Activated naive CD8-positive, alpha-beta T cell treated with anti-CD3 and anti-CD28 coated beads, Interleukin-2, amount 10 ng/mL, durations not matched to agents 7 days and 5 days (primary cell): ENCODE measurements at regions of chr2 and their contacts with region 1.

Region 1: GRCh38 chr2:64945973-64946768 is 43.0 kb upstream of the SLC1A4 start:
- DNase-seq: peak; percentile 79
- ATAC-seq: peak; percentile 97
- H3K4me3 Mint-ChIP-seq: peak overlapping the region; percentile 75
- H3K27ac Mint-ChIP-seq: peak overlapping the region; percentile 91
- H3K4me1 Mint-ChIP-seq: peaks cover 38% of the 10 kb centered on the region
- H3K27me3 Mint-ChIP-seq: no peaks in the 10 kb centered on the region

Region 2: DNA sequence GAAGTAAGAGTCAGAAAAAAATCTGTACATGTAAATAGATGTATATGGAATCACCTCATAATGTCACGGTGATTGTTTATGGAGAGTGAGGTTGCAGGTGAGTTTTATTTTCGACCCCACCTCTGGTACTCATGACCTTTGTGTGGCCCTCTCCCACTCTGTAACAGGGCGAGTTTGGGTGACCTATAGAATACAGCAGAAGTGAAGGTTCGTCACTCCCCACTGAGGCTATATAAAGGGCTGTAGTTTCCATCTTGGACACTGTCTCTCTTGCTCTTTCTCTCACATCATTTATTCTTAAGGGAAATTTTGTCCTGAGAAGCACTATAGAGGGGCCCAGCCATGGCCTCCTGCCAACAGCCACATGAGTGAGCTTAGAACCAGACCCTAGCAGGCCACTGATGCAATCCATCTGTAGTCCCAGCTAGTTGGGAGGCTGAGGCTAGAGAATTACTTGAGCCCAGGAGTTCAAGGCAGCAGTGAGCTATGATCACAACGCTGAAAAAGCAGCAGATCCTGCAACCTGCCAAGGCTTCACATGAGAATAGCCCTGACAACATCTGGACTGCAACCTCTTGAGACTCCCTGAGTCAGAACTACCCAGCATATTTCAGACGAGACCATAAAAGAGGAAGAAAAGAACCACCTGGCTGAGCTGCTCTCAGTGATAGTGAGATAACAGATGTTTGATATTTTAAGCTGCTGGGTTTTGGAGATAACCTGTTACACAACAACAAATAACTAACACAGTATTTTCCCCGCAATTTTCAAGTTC is 31.2 kb before region 1 on chr2:
- POLR2A ChIA-PET with region 1: interaction called, 15 read pairs
- DNase-seq: no peak
- ATAC-seq: no peak
- H3K4me3 Mint-ChIP-seq: no peak overlapping the region
- H3K27ac Mint-ChIP-seq: no peak overlapping the region
- H3K4me1 Mint-ChIP-seq: peaks cover 24% of the 10 kb centered on the region
- H3K27me3 Mint-ChIP-seq: peaks cover 2% of the 10 kb centered on the region

Region 3: DNA sequence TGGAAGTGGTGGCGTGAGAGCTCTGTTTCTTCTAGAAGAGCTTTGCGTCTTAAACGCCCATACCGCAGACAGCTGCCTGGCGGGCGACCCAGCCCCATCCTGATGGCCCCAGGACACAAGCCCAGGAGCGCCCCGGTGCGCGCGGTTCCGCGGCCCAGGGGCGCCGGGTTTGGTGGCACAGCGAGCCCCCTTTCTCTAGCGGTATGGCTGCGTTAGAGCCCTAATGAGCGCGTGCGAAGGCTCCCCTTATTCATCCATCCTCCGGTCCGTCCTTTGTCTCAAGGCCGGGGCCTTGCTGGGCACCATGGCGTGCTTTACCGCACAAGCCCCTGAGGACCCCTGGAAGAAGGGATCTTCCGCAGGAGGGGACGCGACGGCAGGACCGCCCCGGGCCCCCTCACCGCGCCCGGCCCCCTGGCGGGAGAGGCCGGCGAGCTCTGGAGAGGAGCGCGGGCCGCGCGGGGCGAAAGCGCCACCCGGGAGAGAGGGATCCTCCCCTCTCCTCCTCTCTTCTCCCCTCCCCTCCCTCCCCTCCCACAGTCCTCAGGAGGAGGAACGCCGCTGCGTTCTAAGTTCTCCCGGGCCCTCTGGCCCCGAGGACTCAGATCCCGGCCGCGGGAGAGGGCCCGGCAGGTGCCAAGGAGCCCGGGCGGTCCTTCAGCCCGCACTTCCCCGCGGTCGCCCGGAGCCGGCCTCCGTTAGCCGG is 42.4 kb after region 1 on chr2:
- POLR2A ChIA-PET with region 1: interaction called, 21 read pairs
- DNase-seq: peak; percentile 79
- ATAC-seq: peak; percentile 41
- H3K4me3 Mint-ChIP-seq: peak overlapping the region; percentile 87
- H3K27ac Mint-ChIP-seq: peak overlapping the region; percentile 79
- H3K4me1 Mint-ChIP-seq: peaks cover 47% of the 10 kb centered on the region
- H3K27me3 Mint-ChIP-seq: peaks cover 9% of the 10 kb centered on the region